IMR-90 (cell line): ENCODE measurements at regions of chr1 and their contacts with region 1.

Region 1: DNA sequence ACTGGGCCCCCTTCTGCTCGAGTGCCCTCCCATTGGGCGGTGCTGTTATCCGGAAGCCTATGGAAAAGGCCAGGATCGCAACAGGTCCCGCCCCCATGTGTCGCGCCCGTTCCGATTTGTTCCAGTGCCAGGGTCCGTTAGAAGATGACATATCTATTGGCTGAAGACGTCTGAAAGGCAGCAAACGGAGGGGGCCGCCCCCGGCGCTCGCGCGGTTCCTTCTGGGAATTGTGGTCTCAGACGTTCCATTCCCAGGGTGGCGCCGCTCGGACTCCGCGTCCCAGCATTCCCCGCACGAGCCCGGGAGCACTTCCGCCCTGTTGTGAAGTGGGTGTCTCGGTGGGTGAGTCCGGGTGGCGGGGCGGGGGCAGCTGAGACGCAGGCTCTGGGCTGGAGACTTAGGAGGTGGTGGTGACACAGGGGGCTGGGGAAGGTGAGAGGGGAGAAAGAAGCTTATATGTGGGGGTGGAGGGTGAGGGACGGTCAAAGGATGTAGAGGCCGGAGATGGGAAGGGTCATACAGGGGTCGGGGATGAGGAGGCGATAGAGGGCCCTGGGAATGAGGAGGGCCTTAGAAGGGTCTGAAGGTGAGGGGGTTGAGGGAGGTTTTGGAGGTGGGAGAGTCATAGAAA is at the start of gene ZSCAN20:
- DNase-seq: peak; percentile 98
- ATAC-seq: peak; percentile 89
- H3K4me3 ChIP-seq: peak within 1 kb of the TSS; percentile 77
- H3K27ac ChIP-seq: peak within 1 kb of the TSS; percentile 69
- H3K4me1 ChIP-seq: peaks cover 12% of the 10 kb centered on the region
- H3K27me3 ChIP-seq: no peaks in the 10 kb centered on the region
- CTCF ChIP-seq: no peak
- POLR2A ChIP-seq: peak; percentile 82
- RAD21 ChIP-seq: no peak
- total RNA-seq, gene ZSCAN20: 8.1 and 11.1 TPM in 2 replicates

Region 2: DNA sequence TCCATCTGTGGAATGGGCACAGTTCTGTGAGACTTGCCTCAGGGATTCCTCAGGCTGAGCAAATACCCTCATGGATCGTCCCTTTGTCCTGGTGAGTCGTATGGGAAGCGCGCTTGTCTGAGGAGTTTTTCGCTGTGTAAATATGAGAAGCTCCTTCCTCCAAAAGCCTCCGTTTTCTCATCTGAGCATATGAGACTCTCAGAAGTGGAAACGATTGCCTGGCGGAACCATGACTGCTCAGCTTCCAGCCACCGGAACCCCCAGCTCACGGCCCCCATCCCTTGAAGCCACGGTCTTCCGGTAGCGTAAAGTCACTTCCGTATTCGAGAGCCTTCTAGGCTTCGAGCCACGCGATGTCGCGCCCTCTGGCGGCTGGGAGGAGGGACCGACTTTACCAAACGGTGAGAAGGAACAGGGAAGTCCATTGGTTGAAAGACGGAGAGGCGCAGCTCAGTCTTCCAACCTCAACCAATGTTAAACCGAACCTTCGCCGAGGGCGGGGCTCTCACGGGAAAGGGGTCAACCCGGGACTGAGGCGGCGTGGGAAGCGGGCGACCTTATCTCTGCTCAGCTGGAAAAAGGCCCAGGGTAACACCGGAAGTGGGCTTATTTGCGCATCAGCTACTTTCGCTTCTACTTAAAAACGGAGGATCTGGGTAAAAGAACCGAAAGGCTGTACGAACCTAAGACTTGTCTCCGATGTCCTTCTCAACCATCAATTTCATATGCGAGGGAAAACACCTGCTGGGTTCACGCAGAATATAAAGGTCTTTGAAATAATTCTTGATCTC is 345.3 kb before region 1 on chr1:
- CTCF ChIA-PET with region 1: no interaction called
- POLR2A ChIA-PET with region 1: no interaction called
- dilution Hi-C with region 1: no loop called
- in situ Hi-C with region 1: loop called (anchors 10 kb)
- intact Hi-C with region 1: loop called (anchors 1 kb)
- DNase-seq: peak; percentile 100
- ATAC-seq: peak; percentile 98
- H3K4me3 ChIP-seq: peak overlapping the region; percentile 74
- H3K27ac ChIP-seq: peak overlapping the region; percentile 95
- H3K4me1 ChIP-seq: peaks cover 3% of the 10 kb centered on the region; the same call in 1 of the 2 replicates
- H3K27me3 ChIP-seq: no peaks in the 10 kb centered on the region
- CTCF ChIP-seq: peak; percentile 99
- POLR2A ChIP-seq: peak; percentile 96
- RAD21 ChIP-seq: peak; percentile 50

Region 3: DNA sequence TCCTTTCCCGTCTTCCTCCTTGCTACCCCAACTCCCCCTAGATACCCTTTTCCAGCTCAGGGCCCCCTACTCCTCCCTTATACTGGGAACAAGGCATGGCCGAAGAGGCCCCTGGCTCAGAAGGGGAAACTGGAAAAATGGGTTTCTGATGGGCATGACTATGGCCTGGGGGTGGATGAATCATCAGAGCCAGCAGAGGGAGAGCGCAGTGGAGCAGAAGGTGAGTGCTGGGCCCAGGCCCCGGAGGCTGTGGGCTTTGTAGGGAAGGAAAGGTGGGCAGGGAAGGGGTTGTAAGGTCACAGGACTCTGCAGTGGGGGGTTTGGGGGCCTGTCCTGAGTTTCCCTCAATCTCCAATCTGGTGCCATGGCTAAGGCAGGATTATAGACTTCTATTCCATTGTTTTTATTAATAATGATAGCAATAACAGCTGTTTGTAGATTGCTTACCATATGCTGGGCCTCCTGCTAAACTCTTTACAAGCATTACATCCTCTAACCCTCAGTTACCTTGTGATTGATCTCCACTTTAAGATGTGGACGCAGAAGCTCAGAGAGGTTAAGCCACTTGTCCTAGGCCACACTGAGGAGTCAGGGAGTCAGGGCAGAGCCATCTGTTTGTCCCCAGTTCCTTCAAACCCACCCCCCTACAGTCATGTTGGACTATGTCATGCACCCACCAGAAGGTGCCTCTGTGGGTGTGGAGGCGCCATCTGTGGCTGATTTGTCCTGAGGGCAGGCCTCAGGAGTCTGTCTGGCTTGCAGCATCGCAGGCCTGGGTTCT is 252.4 kb before region 1 on chr1:
- CTCF ChIA-PET with region 1: no interaction called
- POLR2A ChIA-PET with region 1: no interaction called
- dilution Hi-C with region 1: no loop called
- in situ Hi-C with region 1: no loop called
- intact Hi-C with region 1: loop called (anchors 5 kb)
- DNase-seq: peak; percentile 45
- ATAC-seq: peak; percentile 56; the same call in 1 of the 2 replicates
- H3K4me3 ChIP-seq: no peak overlapping the region
- H3K27ac ChIP-seq: no peak overlapping the region
- H3K4me1 ChIP-seq: peaks cover 10% of the 10 kb centered on the region
- H3K27me3 ChIP-seq: peaks cover 4% of the 10 kb centered on the region; the same call in 1 of the 2 replicates
- CTCF ChIP-seq: no peak
- POLR2A ChIP-seq: no peak
- RAD21 ChIP-seq: no peak

Region 4: GRCh38 chr1:33349778-33350610 is 122.5 kb before region 1 on chr1:
- CTCF ChIA-PET with region 1: no interaction called
- POLR2A ChIA-PET with region 1: no interaction called
- dilution Hi-C with region 1: no loop called
- in situ Hi-C with region 1: no loop called
- intact Hi-C with region 1: loop called (anchors 1 kb)
- DNase-seq: peak; percentile 72
- ATAC-seq: peak; percentile 82
- H3K4me3 ChIP-seq: peak overlapping the region; percentile 98
- H3K27ac ChIP-seq: peak overlapping the region; percentile 86
- H3K4me1 ChIP-seq: peaks cover 10% of the 10 kb centered on the region
- H3K27me3 ChIP-seq: no peaks in the 10 kb centered on the region
- CTCF ChIP-seq: no peak
- POLR2A ChIP-seq: peak; percentile 71; the same call in 1 of the 2 replicates
- RAD21 ChIP-seq: no peak

Region 5: GRCh38 chr1:33455539-33456501 is 16.6 kb before region 1 on chr1:
- CTCF ChIA-PET with region 1: interaction called, 18 read pairs
- POLR2A ChIA-PET with region 1: no interaction called
- dilution Hi-C with region 1: no loop called
- in situ Hi-C with region 1: no loop called
- intact Hi-C with region 1: no loop called
- DNase-seq: peak; percentile 90
- ATAC-seq: peak; percentile 86
- H3K4me3 ChIP-seq: no peak overlapping the region
- H3K27ac ChIP-seq: no peak overlapping the region
- H3K4me1 ChIP-seq: peaks cover 16% of the 10 kb centered on the region
- H3K27me3 ChIP-seq: no peaks in the 10 kb centered on the region
- CTCF ChIP-seq: peak; percentile 93
- POLR2A ChIP-seq: 0 out of 2 replicates have a peak, but pooled peaks have one; percentile 24
- RAD21 ChIP-seq: peak; percentile 93

Region 6: GRCh38 chr1:33616773-33617172 is 144.3 kb after region 1 on chr1:
- CTCF ChIA-PET with region 1: interaction called, 8 read pairs
- POLR2A ChIA-PET with region 1: no interaction called
- dilution Hi-C with region 1: no loop called
- in situ Hi-C with region 1: no loop called
- intact Hi-C with region 1: loop called (anchors 1 kb)
- DNase-seq: no peak
- ATAC-seq: no peak
- H3K4me3 ChIP-seq: no peak overlapping the region
- H3K27ac ChIP-seq: no peak overlapping the region
- H3K4me1 ChIP-seq: no peaks in the 10 kb centered on the region
- H3K27me3 ChIP-seq: peaks cover 8% of the 10 kb centered on the region
- CTCF ChIP-seq: no peak
- POLR2A ChIP-seq: no peak
- RAD21 ChIP-seq: no peak

Region 7: GRCh38 chr1:33633019-33633801 is 160.7 kb after region 1 on chr1:
- CTCF ChIA-PET with region 1: no interaction called
- POLR2A ChIA-PET with region 1: no interaction called
- dilution Hi-C with region 1: no loop called
- in situ Hi-C with region 1: no loop called
- intact Hi-C with region 1: no loop called
- DNase-seq: peak; percentile 76
- ATAC-seq: peak; percentile 96
- H3K4me3 ChIP-seq: no peak overlapping the region
- H3K27ac ChIP-seq: no peak overlapping the region
- H3K4me1 ChIP-seq: no peaks in the 10 kb centered on the region
- H3K27me3 ChIP-seq: no peaks in the 10 kb centered on the region
- CTCF ChIP-seq: peak; percentile 99
- POLR2A ChIP-seq: no peak
- RAD21 ChIP-seq: peak; percentile 67